BJ (cell line): ENCODE measurements at regions of chr2 and their contacts with region 1.

Region 1: DNA sequence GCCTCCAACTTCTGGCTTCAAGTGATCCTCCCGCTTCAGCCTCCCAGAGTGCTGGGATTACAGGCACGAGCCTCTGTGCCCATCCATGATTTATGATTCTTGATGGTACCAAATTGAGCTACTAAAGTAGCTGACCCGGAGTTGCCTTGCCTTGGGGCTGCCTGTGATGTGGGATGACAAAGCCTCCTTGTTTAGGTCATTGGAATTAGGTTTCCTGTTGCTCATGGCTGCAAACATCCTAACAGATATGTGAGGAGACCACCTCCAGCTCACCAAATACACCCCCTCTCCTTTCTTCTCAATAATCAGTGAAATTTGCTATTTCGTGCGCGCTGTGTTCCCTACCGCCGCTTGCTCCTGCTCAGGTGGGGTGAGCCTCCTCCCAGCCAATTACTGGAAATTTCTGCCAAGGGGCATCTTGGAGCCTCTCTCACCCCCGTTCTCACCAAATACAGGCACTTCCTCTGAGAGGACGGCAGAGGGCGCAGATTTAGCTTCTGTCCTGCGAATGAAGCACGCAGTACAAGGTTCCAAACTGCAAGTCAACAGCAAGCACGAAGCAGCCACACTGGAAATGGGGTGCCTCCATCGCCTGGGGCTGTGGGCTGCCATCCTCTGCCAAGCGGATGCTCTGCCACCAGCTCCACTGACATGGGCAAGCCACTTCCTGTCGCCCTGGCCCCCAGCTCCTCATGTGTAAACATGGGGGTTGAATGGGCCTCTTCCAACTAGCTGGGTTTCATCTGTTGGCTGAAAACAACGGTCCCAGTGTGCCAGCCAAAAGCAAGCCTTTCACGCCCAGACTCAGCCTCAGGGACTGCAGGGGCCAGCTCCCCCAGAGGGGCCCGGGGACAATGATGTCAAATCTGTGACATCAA is 71.7 kb downstream of the NCAPH start:
- DNase-seq: peak; percentile 4
- H3K4me3 ChIP-seq: no peak overlapping the region
- H3K27me3 ChIP-seq: peaks cover 3% of the 10 kb centered on the region
- CTCF ChIP-seq: peak; percentile 90

Region 2: DNA sequence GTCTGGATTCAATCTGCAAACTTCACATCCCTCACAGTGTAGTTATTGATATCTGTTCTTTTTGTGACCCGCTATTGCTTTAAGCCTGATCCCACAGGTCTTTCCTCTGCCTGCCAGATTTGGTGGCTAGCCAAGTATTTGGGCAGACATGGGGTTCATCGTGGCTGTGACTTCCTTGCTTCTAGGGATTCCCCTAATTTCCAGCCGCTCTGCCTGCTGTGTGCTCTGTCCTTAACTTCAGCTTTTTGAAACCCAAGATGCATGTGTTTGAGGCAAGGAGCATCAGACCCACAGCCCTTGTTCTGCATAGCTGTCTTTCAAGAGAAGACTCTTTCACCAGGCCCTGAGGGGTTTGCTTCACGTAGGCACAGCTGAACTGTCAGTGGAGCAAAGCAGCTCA is 17.5 kb before region 1 on chr2:
- CTCF ChIA-PET with region 1: interaction called, 12 read pairs
- POLR2A ChIA-PET with region 1: no interaction called
- DNase-seq: no peak
- H3K4me3 ChIP-seq: no peak overlapping the region
- H3K27me3 ChIP-seq: peaks cover 3% of the 10 kb centered on the region; the same call in 1 of the 2 replicates
- CTCF ChIP-seq: no peak

Region 3: DNA sequence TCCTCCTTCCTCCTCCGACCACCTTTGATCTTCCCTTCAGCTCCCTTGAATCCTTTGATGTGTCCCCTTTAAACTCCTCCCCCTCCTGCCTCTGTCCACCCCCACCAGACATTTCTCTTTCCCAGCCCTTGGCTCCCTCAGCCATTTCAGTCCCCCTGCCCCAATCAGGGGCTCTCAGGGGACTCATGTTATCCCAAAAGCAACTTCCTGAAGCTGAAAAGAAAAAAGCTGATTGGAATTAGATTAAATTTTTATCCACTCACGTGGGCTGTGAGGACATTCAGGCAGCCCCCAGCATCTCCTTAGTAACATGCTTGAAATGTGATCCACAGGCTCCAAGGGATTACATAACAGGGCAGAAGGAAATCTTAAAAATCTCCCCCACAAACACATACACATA is 16.5 kb after region 1 on chr2:
- CTCF ChIA-PET with region 1: interaction called, 17 read pairs
- POLR2A ChIA-PET with region 1: interaction called, 6 read pairs
- DNase-seq: peak; percentile 13
- H3K4me3 ChIP-seq: no peak overlapping the region
- H3K27me3 ChIP-seq: no peaks in the 10 kb centered on the region
- CTCF ChIP-seq: no peak

Region 4: GRCh38 chr2:96449637-96450036 is 42.4 kb after region 1 on chr2:
- CTCF ChIA-PET with region 1: no interaction called
- POLR2A ChIA-PET with region 1: no interaction called
- DNase-seq: no peak
- H3K4me3 ChIP-seq: no peak overlapping the region
- H3K27me3 ChIP-seq: peaks cover 9% of the 10 kb centered on the region
- CTCF ChIP-seq: no peak

Region 5: GRCh38 chr2:96495982-96496629 is 88.8 kb after region 1 on chr2:
- CTCF ChIA-PET with region 1: interaction called, 11 read pairs
- POLR2A ChIA-PET with region 1: no interaction called
- DNase-seq: no peak
- H3K4me3 ChIP-seq: no peak overlapping the region
- H3K27me3 ChIP-seq: peaks cover 33% of the 10 kb centered on the region
- CTCF ChIP-seq: no peak

Region 6: DNA sequence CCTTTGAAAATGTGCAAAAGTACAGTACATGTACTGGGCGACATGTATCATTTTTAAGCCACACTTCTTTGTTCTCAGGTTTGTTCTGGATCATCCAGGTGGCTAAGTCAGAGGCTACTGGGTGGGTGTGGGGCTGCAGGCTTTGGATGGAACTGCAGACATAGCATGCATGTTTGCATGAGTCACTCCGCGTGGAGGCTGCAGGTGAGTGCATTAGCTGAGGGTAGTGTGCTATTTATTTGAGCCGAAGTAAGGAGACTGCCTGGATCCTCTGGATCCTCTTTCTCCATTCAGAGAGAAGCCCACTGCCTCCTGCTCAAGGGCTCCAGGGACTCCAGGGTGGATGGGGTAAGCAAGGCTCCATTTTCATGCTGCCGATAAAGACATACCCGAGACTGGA is 107.2 kb after region 1 on chr2:
- CTCF ChIA-PET with region 1: interaction called, 253 read pairs
- POLR2A ChIA-PET with region 1: no interaction called
- DNase-seq: no peak
- H3K4me3 ChIP-seq: no peak overlapping the region
- H3K27me3 ChIP-seq: peaks cover 5% of the 10 kb centered on the region
- CTCF ChIP-seq: no peak